ENCODE measurements at regions of chr6 and their contacts with region 1.

Region 1: GRCh38 chr6:90478789-90479602 is 107.9 kb downstream of the MAP3K7 start:
- DNase-seq: peak; percentile 85 to 93
- H3K4me3 ChIP-seq: no peak overlapping the region
- H3K27ac ChIP-seq: peak overlapping the region; percentile 4 to 10
- H3K4me1 ChIP-seq: no peaks in the 10 kb centered on the region
- H3K27me3 ChIP-seq: no peaks in the 10 kb centered on the region
- CTCF ChIP-seq: peak; percentile 88 to 92 (median 92)
- POLR2A ChIP-seq: no peak

Region 2: GRCh38 chr6:89655122-89655521 is 823.9 kb before region 1 on chr6:
- intact Hi-C with region 1: no loop called
- DNase-seq: no peak
- H3K4me3 ChIP-seq: no peak overlapping the region
- H3K27ac ChIP-seq: no peak overlapping the region
- H3K4me1 ChIP-seq: no peaks in the 10 kb centered on the region
- H3K27me3 ChIP-seq: no peaks in the 10 kb centered on the region
- CTCF ChIP-seq: no peak
- POLR2A ChIP-seq: no peak

Region 3: GRCh38 chr6:89934685-89935366 is 544.2 kb before region 1 on chr6:
- intact Hi-C with region 1: loop called (anchors 5 kb)
- DNase-seq: no peak
- H3K4me3 ChIP-seq: no peak overlapping the region
- H3K27ac ChIP-seq: no peak overlapping the region
- H3K4me1 ChIP-seq: no peaks in the 10 kb centered on the region
- H3K27me3 ChIP-seq: no peaks in the 10 kb centered on the region
- CTCF ChIP-seq: no peak
- POLR2A ChIP-seq: no peak

Region 4: DNA sequence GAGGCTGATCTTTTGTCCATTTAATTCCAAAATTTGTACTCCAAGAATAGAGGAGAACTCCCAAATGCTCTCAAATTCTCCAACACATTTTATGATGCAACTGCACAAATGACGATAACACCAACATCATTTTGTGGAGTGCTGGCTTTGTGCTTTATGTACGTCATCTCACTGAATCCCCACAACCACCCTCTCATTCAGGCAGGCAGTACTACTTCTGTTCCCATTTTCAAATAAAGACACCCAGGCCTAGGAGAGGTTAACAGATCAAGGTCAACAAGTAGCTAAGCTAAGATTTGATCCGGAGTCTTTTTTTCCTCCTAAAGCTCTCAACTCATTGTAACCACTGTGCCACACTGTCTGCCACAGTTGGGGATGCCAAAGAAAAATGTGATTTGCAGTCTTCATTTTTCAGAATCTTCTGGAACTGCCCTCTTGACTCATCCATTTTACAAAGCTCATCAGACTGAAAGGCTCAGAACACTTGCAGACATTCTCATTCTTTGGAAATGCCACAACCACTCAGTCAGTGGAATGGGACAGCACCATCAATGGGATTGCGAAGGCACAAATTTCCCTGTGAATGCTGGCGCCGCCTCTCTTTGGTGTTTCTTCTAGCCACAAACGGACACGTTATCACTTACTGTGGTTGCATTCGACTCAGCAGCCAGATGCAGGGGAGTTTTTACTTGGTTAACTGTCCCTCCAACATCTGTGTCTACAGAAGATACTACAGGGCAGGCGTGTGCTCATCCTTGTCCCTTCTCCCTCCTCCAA is 400.3 kb before region 1 on chr6:
- intact Hi-C with region 1: loop called (anchors 10 kb)
- DNase-seq: no peak
- H3K4me3 ChIP-seq: no peak overlapping the region
- H3K27ac ChIP-seq: no peak overlapping the region
- H3K4me1 ChIP-seq: no peaks in the 10 kb centered on the region
- H3K27me3 ChIP-seq: no peaks in the 10 kb centered on the region
- CTCF ChIP-seq: no peak
- POLR2A ChIP-seq: no peak

Region 5: DNA sequence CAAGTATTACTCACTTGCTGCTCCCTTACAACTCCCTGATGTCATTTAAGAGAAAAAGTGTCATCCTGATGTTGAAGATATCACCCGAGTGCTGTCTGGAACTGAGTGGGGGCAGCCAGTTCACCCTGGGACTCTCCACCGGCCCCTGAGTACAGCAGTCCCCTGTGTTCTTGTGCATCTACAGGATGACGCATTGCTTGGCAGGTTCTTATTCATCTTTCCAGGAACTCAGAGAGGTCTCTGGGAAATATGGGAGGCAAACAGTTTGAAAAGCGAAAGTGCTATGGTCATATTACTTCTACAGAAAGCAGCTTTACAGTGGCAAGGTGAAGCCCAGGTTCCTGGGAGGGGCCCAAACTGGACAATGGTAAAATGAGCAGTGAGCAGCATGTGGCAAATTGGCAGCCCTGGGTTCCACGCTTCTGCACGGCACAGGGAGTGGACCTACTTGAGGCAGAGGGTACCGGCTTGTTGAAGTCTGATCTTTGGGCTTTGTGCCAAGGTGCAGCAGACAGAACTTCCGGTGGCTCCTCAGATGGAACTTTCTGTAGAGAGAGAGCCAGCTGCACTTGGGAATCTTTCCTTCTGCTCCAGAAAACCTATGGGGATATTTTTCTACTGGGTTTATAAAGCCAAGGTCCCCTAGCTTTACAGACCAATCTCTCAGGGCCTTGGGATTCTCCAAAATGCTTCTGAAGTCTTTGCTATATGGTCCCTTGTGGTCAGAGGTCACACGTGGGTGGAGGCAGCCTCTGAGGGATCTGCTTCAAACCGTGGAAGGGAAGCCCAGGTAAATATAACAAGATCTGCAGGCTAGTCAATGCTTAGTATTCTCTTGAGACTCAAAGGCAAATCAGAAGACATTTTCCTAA is 20.4 kb before region 1 on chr6:
- intact Hi-C with region 1: no loop called
- DNase-seq: no peak
- H3K4me3 ChIP-seq: no peak overlapping the region
- H3K27ac ChIP-seq: no peak overlapping the region
- H3K4me1 ChIP-seq: no peaks in the 10 kb centered on the region
- H3K27me3 ChIP-seq: no peaks in the 10 kb centered on the region
- CTCF ChIP-seq: no peak
- POLR2A ChIP-seq: no peak